Posterior cingulate gyrus (tissue), 11 donors: ENCODE measurements at regions of chr6 and their contacts with region 1.

Region 1: DNA sequence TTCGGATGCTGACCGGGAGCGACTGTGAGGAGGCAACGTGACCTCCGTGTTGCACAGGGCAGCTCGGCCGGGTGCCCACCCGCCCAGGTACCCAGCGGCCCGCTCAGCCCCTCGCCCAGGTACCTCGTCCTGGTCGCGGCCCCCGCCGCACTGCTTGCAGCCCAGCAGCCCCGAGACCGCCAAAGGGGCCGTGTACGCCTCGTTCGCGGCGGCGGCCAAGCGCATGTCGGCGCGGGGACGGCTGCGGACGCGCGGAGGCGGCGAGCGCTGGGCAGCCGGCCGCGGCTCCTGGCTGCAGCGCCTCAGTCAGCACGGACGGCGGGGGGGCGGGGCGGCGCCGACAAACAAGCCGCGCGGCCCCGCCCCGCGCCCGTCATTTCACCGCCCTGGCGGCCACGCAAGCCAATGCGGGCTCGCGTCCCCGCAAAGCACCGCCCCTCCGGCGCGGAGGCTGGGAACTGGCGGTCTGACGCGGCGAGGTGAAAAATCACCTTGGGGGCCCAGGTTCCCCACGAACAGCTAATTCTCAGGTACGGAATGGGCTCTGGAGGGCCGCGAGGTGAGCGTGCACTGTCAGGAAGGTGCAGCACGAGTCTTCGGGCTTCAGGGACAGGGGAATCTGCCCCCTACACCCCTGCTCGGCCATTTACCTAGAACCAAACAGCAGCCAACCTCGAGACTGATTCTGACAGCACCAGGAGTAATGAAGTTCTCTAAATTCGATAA is 85.2 kb downstream of the SESN1 start:
- DNase-seq: peak; percentile 85 to 99 (median 94)

Region 2: DNA sequence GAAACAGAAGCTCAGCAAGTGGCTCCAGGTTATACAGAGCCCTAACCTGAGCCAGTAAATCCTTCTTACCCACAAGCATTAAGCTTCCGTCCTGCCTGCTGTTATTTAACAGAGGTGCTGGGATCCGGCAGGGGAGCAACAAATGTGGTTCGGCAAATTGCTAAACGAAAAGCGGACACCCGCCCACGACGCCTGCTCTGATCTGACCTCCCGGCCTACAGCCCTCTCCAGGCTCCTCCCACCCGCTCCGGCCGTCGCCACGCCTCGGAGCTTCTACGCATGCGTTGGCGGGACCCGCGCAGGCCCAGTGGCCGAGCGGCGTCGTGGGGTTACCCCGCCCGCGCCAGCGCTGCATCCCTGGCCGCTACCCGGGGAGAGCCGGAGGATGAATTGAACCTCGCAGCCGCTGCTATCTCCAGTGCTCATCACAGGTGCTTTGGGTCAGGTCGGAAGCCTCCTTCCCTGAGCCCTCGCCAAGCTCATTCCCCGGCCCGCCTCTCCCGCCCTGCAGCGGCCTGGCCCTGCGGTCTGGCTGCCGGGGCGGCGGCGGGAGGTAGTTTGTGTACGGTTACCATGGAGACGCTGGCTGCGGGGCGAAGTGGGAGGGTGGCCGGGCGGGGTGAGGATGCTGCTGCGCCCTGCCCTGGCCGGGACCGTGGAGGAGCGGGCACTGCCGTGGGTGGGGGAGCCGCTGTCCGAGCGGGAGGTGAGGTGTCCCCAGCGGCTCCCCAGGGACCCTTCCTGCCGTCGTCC is 161.1 kb before region 1 on chr6 and contains the start of gene ARMC2:
- intact Hi-C with region 1: loop called (anchors 5 kb)
- DNase-seq: peak; percentile 85 to 99 (median 93)

Region 3: GRCh38 chr6:109050012-109050411 is 40.6 kb after region 1 on chr6:
- intact Hi-C with region 1: loop called (anchors 5 kb)
- DNase-seq: peak in 5 of 10 donors; percentile 11 to 84 (median 27)

Region 4: DNA sequence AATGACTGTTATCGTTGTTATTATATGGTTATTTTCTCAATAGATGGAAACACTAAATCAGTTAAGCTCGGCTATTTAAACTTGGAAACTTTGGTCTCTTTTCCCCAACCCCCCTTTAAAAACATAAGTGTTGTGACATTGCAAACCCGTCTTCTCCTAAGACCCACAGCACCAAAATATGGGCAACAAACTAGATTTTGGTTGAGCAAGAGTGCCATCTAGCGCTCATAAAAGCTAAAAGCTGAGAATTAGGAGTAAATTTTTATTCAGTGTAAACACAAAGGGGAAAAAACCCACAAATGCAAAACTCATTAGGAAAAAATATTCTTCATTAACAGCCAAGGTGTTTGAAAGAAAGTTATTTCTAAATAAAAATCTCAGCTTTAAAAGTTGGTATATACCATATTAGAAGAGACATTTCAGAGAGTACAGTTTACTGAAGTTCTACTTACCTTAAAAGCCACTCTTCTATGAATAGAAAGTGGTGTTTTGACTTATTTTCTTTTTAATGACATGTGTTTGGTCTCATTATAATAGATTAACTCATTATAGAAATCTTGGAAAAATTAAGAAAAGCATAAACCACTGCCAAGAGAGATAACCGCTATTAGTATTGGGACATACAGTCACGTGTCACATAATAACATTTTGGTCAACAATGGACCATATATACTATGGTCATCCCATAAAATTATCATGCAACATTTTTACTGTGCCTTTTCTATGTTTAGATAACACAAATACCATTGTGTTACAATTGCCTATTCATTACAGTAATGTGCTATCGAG is 64.1 kb after region 1 on chr6:
- intact Hi-C with region 1: loop called (anchors 5 kb)
- DNase-seq: peak in 2 of 10 donors; percentile 17 to 23

Region 5: DNA sequence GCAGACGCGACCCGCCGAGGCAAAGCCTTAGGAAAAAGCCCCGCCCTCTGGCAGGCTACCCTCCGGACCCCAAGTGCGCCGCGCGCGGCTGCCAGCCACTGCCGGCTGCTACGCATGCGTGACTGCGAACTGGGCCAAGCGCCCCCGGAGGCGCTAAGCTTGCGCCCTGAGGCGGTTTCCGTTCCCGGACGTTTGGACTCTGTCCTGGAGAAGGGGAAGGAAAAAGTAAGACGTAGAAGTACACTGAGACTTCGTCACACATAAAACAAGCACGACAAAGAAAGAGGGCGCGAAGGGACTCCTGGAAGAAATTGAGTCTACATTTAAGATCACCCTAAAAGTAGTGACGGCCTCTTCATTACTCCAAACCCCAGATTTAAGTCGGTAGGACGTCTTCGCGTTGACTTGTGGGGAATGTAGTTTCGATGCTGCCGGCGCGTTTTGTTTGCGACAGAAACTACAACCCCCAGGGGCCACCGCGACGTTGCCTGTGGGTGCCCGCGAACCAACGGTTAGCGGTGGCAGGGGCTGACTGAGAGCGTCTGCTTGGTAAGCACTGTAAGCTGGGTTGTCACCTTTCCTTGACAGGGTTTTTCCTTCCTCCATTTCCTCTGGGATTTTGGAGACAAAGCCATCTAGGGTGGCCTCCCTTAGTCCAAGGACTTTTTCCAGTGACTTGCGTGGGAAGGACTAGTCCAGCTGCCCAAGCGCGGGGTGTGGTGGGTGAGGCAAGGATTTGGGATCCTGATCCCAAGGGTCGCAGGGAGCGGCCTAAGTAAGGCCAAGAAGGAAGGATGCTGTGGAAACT is 85.8 kb after region 1 on chr6 and contains the start of gene CEP57L1:
- intact Hi-C with region 1: loop called (anchors 5 kb)
- DNase-seq: peak; percentile 93 to 99 (median 95)

Region 6: DNA sequence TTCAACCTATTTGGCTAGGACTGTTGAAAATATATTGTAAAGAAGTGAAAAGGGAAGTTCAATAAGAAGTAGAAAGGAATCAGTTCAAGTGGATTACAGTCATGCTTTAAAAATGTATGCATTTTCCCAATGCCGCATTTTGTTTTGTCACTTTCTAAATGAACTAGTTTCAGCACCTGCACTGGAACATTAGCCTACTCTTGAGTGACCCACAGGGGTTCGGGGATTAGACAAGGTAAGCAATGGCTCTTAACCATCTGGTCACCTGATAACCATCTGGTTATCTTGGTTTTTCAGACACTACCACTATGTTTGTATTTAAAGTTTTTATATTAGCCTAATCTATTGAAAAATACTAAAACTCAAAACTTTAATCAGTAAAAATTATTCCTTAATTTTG is 275.3 kb after region 1 on chr6:
- intact Hi-C with region 1: no loop called
- DNase-seq: no peak

Region 7: GRCh38 chr6:109653264-109653663 is 643.9 kb after region 1 on chr6:
- intact Hi-C with region 1: no loop called
- DNase-seq: no peak

Region 8: GRCh38 chr6:109783250-109783986 is 774.0 kb after region 1 on chr6:
- intact Hi-C with region 1: no loop called
- DNase-seq: no peak